ENCODE measurements at regions of chr16 and their contacts with region 1.

Region 1: GRCh38 chr16:13919683-13920509 is at the start of gene ERCC4:
- DNase-seq: peak; percentile 94
- ATAC-seq: peak; percentile 97
- H3K4me3 Mint-ChIP-seq: peak within 1 kb of the TSS; percentile 92
- H3K27ac Mint-ChIP-seq: peak within 1 kb of the TSS; percentile 88
- H3K4me1 Mint-ChIP-seq: peaks cover 25% of the 10 kb centered on the region
- H3K27me3 Mint-ChIP-seq: no peaks in the 10 kb centered on the region
- CTCF ChIP-seq: peak; percentile 57
- total RNA-seq, gene ERCC4: 10.2 and 10.7 TPM in 2 replicates

Region 2: DNA sequence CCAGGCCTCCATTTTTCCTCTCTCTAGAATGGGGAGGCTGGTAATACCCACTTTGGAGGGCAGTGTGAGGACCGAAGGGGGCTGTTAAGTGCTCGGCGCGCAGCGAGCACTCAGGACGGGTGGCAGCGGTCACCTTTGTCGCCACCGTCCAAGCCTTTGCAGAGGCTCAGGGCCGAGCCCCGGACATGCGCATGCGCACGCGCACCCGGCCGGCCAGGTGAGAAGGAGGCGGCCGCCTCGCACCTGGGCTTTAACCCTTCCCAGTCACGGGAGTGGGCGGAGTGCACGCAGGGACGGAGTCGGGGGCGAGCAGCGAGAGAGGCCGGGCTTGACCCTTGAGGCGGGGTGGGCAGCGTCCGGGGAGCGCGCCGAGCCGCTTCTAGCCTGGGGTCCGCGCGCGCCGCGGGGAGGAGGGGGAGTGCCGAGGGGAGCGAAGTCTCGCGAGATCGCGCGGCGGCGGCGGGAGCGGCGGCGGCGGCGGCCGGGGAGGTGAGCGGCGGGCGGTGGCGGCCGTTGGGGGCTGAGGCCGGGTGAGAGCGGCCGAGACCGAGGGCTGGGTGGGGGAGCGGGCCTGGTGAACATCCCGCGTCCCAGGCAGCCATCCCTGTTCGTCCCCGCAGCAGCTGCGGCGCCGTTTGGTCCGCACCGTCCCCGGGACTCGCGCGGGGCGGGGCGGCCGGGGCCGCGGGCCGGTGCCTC is 151.1 kb after region 1 on chr16 and contains the start of gene MRTFB:
- CTCF ChIA-PET with region 1: interaction called, 3 read pairs
- POLR2A ChIA-PET with region 1: interaction called, 5 read pairs
- intact Hi-C with region 1: loop called (anchors 2 kb)
- DNase-seq: peak; percentile 85
- ATAC-seq: peak; percentile 89
- H3K4me3 Mint-ChIP-seq: peak within 1 kb of the TSS; percentile 92
- H3K27ac Mint-ChIP-seq: peak within 1 kb of the TSS; percentile 73
- H3K4me1 Mint-ChIP-seq: peaks cover 6% of the 10 kb centered on the region
- H3K27me3 Mint-ChIP-seq: no peaks in the 10 kb centered on the region
- CTCF ChIP-seq: no peak
- total RNA-seq, gene MRTFB: 20.9 and 23.9 TPM in 2 replicates

Region 3: DNA sequence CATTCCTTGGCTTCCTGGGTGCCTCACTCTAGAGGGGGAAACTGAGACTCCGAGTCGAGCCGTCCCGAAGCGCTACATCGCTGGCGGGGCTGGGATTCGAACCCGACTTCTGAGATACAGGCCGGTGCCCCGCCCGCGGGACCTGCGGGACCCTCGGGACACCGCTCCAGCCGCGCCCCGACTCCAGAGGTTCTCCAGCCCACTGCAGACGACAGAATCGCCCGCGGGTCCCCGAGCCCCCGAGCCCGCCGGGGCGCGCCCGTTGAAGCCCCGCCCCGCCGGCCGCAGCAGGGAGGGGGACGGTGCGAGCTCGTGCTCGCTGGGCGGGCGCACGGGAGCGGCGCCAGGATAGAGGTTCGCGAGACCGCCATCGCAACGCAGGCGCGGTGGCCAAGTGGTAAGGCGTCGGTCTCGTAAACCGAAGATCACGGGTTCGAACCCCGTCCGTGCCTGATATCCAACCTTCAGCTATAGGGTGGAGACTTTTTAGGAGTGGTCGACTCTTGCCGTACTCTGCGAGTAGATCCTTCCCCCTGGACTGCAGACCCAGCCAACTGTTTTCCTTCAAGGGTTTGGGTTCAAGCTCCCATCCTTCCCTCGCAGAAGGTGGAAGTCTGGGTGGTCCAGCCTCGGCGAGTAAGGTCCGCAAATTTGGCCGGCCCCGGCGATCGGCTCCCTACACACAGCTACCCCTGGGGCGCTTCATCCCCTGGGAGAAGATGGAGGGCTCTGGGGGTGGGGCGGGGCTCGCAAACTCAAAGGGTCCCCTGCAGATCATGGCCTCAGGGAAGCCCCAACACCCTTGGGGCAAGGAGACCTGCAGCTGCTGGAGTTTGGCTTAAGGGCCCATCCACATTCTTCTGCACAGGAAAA is 365.9 kb after region 1 on chr16:
- CTCF ChIA-PET with region 1: interaction called, 7 read pairs
- POLR2A ChIA-PET with region 1: interaction called, 18 read pairs
- intact Hi-C with region 1: loop called (anchors 1 kb)
- DNase-seq: peak; percentile 98
- ATAC-seq: peak; percentile 79
- H3K4me3 Mint-ChIP-seq: peak overlapping the region; percentile 92
- H3K27ac Mint-ChIP-seq: peak overlapping the region; percentile 87
- H3K4me1 Mint-ChIP-seq: peaks cover 23% of the 10 kb centered on the region
- H3K27me3 Mint-ChIP-seq: peaks cover 2% of the 10 kb centered on the region
- CTCF ChIP-seq: no peak

Region 4: GRCh38 chr16:14354551-14355351 is 434.9 kb after region 1 on chr16:
- CTCF ChIA-PET with region 1: no interaction called
- POLR2A ChIA-PET with region 1: no interaction called
- intact Hi-C with region 1: loop called (anchors 1 kb)
- DNase-seq: no peak
- ATAC-seq: peak; percentile 93
- H3K4me3 Mint-ChIP-seq: peak overlapping the region; percentile 59
- H3K27ac Mint-ChIP-seq: peak overlapping the region; percentile 64
- H3K4me1 Mint-ChIP-seq: peaks cover 32% of the 10 kb centered on the region
- H3K27me3 Mint-ChIP-seq: peaks cover 2% of the 10 kb centered on the region
- CTCF ChIP-seq: no peak

Region 5: DNA sequence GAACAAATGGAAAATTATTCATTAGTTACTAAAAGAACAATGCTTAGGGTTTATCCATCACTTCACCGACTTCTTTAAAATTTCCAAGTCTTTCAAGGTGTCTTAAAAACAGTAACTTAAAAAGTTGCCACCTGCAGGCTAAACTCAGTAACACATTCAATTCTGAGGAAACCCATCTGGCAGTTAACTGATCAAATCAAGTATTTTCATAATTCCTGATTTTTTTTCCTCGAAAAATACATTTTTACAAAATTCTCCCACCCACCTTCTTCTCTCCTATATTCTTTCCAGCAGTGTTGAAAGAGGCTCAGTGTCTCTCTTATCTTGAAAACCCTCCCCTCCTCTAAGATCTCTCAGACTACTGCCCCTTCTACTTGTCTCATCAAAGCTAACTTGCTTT is 680.3 kb after region 1 on chr16:
- CTCF ChIA-PET with region 1: interaction called, 5 read pairs
- POLR2A ChIA-PET with region 1: no interaction called
- intact Hi-C with region 1: loop called (anchors 10 kb)
- DNase-seq: no peak
- ATAC-seq: no peak
- H3K4me3 Mint-ChIP-seq: no peak overlapping the region
- H3K27ac Mint-ChIP-seq: no peak overlapping the region
- H3K4me1 Mint-ChIP-seq: no peaks in the 10 kb centered on the region
- H3K27me3 Mint-ChIP-seq: no peaks in the 10 kb centered on the region
- CTCF ChIP-seq: peak; percentile 49